CD14-positive monocyte (primary cell): ENCODE measurements at regions of chr19 and their contacts with region 1.

Region 1: DNA sequence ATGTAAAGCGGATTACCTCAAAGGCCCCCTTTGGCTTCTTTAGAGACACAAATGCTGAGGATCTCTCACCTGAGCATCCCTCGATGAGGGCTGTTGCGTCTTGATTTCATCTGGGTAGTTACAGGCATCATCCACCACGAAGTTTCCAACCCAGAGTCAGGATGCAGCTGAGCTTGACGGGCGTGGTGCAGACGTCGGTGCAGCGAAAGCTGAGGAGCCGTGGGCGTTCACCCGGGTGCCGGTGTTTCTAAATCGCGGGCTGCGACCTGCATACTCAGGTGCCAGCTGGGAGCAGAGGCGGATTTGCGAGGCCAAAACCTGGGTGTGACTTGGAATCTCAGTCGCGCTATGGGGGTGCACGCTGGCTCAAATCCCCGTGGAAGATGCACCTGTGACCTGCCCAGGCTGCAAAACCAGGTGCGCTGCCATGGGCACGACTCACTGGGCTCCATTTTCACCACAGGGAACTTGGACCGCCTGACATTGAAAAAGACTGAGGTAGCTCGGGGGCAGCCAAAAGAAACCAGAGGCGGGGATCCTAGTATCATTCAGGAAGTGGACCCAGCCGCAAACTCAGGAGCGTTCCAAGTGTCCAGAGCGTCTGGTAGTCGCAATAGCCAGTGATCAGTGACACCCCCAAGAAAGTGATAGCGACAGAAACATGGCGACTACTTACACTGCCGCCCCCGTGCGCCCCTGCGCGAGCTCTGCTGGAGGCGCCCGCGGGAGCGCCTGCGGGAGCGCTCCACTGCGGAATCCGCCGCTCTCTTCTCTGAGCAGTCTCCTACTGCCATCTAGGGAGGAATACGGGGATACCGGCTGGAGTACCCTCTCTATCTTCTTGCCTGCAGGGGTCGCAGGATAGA is 36.4 kb upstream of the IGFL4 start:
- DNase-seq: peak in 2 of 3 donors; percentile 18 to 58
- H3K4me3 ChIP-seq: no peak overlapping the region
- H3K4me3 Mint-ChIP-seq: peak overlapping the region in 1 of 2 donors; percentile 87
- H3K27ac ChIP-seq: no peak overlapping the region
- H3K27ac Mint-ChIP-seq: peak overlapping the region in 1 of 7 donors; percentile 20
- H3K4me1 ChIP-seq: peaks cover 5 to 17% of the 10 kb centered on the region in 2 donors
- H3K4me1 Mint-ChIP-seq: peaks cover 18% of the 10 kb centered on the region
- H3K27me3 ChIP-seq: peaks cover 54 to 80% of the 10 kb centered on the region in 2 donors
- H3K27me3 Mint-ChIP-seq: peaks cover 48 to 76% (median 69%) of the 10 kb centered on the region in 3 donors
- CTCF ChIP-seq: peak; percentile 52

Region 2: DNA sequence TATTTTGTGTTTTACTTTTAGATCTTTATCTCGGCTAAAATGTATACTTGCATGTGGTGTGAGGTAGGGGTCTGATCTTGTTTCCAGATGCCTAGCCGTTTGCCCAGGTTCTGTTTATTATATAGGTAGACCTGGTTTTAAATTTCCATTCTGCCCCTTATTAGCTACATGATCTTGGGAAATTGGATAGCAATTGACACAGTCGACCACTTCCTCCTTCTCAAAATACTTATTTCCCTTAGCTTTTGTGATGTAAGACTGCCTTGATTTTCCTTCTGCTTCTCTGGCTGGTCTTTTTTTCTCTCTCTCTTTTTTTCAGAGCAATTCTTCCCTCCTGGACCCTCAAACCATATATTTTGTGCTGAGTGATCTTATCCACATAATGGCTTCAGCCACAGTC is 51.3 kb before region 1 on chr19:
- intact Hi-C with region 1: loop called in 1 of 2 experiments (anchors 5 kb)
- DNase-seq: peak in 1 of 3 donors; percentile 28
- H3K4me3 ChIP-seq: no peak overlapping the region
- H3K4me3 Mint-ChIP-seq: peak overlapping the region in 1 of 2 donors; percentile 66
- H3K27ac ChIP-seq: no peak overlapping the region
- H3K27ac Mint-ChIP-seq: peak overlapping the region in 1 of 7 donors; percentile 72
- H3K4me1 ChIP-seq: peaks cover 27 to 33% of the 10 kb centered on the region in 2 donors
- H3K4me1 Mint-ChIP-seq: peaks cover 34% of the 10 kb centered on the region
- H3K27me3 ChIP-seq: peaks cover 3 to 38% of the 10 kb centered on the region in 2 donors
- H3K27me3 Mint-ChIP-seq: peaks cover 42 to 67% (median 53%) of the 10 kb centered on the region in 3 donors
- CTCF ChIP-seq: no peak

Region 3: DNA sequence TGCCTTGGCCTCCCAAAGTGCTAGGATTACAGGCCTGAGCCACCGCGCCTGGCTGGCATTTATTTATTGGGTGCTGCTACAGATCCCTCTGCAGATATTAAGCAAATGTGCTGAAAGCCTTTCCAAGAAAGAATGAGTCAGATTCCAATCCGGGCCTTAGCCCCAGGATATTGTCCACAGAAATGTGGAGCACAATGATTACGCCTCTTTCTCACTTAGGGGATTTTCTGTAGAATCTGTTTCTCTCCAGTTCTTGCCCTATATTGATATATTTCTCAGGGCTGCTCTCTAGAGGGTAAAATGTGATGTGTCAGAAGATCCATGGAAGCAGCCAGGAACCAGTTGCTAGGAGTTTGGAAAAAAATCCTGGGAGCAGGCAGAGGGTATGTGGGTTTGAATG is 11.6 kb before region 1 on chr19:
- intact Hi-C with region 1: no loop called
- DNase-seq: no peak
- H3K4me3 ChIP-seq: no peak overlapping the region
- H3K4me3 Mint-ChIP-seq: peak overlapping the region in 1 of 2 donors; percentile 33
- H3K27ac ChIP-seq: no peak overlapping the region
- H3K27ac Mint-ChIP-seq: no peak overlapping the region
- H3K4me1 ChIP-seq: peaks cover 10 to 12% of the 10 kb centered on the region in 2 donors
- H3K4me1 Mint-ChIP-seq: peaks cover 15% of the 10 kb centered on the region
- H3K27me3 ChIP-seq: peaks cover 44 to 60% of the 10 kb centered on the region in 2 donors
- H3K27me3 Mint-ChIP-seq: peaks cover 52 to 74% (median 57%) of the 10 kb centered on the region in 3 donors
- CTCF ChIP-seq: no peak

Region 4: DNA sequence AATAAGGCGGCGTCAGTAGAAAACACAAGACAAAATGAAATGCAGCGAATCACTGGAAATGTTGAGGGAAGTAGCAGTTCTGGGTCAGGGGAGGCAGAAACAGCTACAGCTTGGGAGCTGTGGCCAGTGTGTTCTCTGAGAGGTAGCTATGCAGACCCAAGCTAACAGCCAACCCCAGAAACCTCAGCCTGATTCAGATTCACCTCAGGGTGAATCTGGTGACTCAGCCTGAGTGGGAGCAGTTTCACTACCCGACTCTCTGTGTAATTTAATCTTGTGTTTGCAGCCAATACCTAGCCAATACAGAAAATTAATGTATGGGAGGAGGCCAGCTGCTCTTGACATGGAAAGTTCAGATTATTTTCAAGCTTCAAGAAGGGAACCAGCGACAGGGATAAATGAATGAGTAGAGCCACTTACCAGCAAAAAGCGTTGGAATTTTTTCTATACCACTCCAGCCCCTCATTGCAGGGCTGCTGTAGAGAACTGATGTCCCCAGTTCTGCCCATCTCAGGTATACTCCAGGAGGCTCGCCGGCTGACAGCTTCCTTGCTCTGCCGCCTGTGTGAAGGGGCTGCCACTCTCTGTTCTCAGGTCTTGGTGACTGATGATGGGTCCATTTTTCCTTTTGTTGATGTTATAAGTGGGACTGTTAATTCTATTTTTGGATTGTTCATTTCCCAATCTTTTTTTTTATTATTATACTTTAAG is 38.4 kb after region 1 on chr19:
- intact Hi-C with region 1: no loop called
- DNase-seq: no peak
- H3K4me3 ChIP-seq: no peak overlapping the region
- H3K4me3 Mint-ChIP-seq: no peak overlapping the region
- H3K27ac ChIP-seq: no peak overlapping the region
- H3K27ac Mint-ChIP-seq: no peak overlapping the region
- H3K4me1 ChIP-seq: no peaks in the 10 kb centered on the region
- H3K4me1 Mint-ChIP-seq: no peaks in the 10 kb centered on the region
- H3K27me3 ChIP-seq: peaks cover 4 to 8% of the 10 kb centered on the region in 2 donors
- H3K27me3 Mint-ChIP-seq: peaks cover 11 to 15% (median 15%) of the 10 kb centered on the region in 3 donors
- CTCF ChIP-seq: no peak

Region 5: GRCh38 chr19:46181388-46181779 is 104.2 kb after region 1 on chr19:
- intact Hi-C with region 1: loop called in 1 of 2 experiments (anchors 10 kb)
- DNase-seq: peak; percentile 76 to 94 (median 88)
- H3K4me3 ChIP-seq: no peak overlapping the region
- H3K4me3 Mint-ChIP-seq: peak overlapping the region in 1 of 2 donors; percentile 69
- H3K27ac ChIP-seq: peak overlapping the region in 1 of 2 donors; percentile 18
- H3K27ac Mint-ChIP-seq: peak overlapping the region; percentile 52 to 80 (median 64)
- H3K4me1 ChIP-seq: peaks cover 20 to 22% of the 10 kb centered on the region in 2 donors
- H3K4me1 Mint-ChIP-seq: peaks cover 26% of the 10 kb centered on the region
- H3K27me3 ChIP-seq: peaks cover 0 to 4% of the 10 kb centered on the region in 2 donors
- H3K27me3 Mint-ChIP-seq: peaks cover 10 to 26% (median 21%) of the 10 kb centered on the region in 3 donors
- CTCF ChIP-seq: no peak

Region 6: DNA sequence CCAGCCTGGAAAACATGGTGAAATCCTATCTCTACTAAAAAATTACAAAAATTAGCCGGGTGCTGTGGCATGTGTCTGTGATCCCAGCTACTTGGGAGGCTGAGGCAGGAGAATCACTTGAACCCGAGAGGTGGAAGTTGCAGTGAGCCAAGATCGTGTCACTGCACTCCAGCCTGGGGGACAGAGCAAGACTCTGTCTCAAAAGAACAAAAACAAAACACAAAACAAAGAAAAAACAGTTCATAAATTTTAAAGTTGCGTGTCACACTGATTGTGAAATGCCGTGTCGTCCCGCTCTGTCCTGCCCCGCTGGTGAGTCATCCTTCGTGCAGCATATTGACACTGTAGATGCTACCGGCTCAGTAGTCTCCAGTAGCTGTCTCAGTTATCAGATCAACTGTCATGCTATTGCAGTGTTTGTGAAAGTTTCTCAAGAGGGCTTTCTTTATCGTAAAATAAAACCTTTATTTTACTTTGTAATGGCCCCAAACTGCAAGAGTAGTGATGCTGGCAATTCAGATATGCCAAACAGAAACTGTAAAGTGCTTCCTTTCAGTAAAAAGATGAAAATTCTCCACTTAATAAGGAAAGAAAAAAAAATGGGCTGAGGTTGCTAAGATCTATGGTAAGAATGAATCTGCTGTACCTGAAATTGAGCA is 115.9 kb after region 1 on chr19:
- intact Hi-C with region 1: loop called (anchors 2 to 10 kb)
- DNase-seq: peak; percentile 95 to 98 (median 96)
- H3K4me3 ChIP-seq: peak overlapping the region; percentile 2 to 32 (median 9)
- H3K4me3 Mint-ChIP-seq: peak overlapping the region; percentile 71 to 83
- H3K27ac ChIP-seq: peak overlapping the region; percentile 91 to 96
- H3K27ac Mint-ChIP-seq: peak overlapping the region; percentile 98 to 100 (median 99)
- H3K4me1 ChIP-seq: peaks cover 31 to 34% of the 10 kb centered on the region in 2 donors
- H3K4me1 Mint-ChIP-seq: peaks cover 38% of the 10 kb centered on the region
- H3K27me3 ChIP-seq: peaks cover 0 to 2% of the 10 kb centered on the region in 2 donors
- H3K27me3 Mint-ChIP-seq: peaks cover 18 to 27% (median 26%) of the 10 kb centered on the region in 3 donors
- CTCF ChIP-seq: no peak

Region 7: DNA sequence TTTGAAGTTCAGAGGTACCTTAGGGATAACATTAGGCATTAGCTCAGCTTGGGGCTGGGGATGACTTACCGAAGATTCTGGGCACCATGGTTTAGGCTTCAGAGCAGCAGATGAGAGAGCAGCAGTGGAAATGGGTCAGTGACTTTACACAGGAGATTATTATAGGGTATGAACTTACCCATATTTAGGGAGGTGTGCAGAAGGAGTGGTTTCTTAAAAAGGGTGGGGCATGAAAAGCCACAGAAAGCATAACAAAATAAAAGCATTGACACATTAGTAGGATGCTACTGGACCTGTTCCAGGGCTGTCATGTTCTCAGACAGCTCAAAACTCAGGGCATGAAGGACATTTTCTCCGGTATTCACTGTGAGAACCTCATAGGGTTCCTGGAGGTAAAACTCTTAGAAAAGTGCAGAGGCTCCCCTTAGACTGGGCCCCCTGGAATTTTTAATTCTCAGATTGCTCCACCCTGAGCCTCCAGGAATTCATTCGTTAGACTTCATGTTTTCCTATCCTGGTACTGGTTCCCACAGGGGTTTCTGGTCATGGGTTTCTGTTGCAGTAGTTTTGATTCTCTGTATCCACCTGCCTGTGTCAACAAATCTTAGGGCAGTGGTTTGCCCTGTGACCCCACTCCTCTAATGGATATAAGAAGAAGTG is 173.0 kb after region 1 on chr19:
- intact Hi-C with region 1: no loop called
- DNase-seq: no peak
- H3K4me3 ChIP-seq: no peak overlapping the region
- H3K4me3 Mint-ChIP-seq: peak overlapping the region in 1 of 2 donors; percentile 33
- H3K27ac ChIP-seq: no peak overlapping the region
- H3K27ac Mint-ChIP-seq: no peak overlapping the region
- H3K4me1 ChIP-seq: peaks cover 0 to 9% of the 10 kb centered on the region in 2 donors
- H3K4me1 Mint-ChIP-seq: peaks cover 6% of the 10 kb centered on the region
- H3K27me3 ChIP-seq: peaks cover 16 to 20% of the 10 kb centered on the region in 2 donors
- H3K27me3 Mint-ChIP-seq: peaks cover 31 to 54% (median 40%) of the 10 kb centered on the region in 3 donors
- CTCF ChIP-seq: no peak

Region 8: DNA sequence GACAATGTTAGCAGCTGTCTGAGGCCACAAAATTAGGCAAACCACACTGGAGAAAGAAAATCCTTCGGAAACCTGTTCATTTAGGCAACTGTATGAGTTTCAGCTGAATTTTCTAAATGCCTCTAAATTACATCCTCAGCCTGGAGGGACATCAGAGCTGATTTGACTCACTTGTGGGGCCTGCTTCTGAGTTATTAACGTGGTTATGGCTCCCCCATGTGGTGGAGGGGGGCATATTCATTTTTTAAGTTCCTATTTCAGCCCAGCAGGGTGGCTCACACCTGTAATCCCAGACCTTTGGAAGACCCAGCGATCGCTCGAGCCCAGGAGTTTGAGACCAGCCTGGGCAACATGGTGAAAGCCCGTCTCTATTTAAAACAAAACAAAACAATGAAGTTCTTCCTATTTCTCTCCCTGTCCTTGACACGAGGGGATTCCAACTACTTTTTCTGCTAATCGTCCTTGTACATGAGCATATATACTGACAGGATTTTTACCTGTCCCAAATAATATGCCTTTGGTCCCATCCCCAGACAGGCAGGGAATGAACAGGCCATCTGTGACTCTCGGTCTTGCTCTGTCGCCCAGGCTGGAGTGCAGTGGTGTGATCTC is 188.1 kb after region 1 on chr19:
- intact Hi-C with region 1: loop called (anchors 5 kb)
- DNase-seq: peak; percentile 54 to 75 (median 61)
- H3K4me3 ChIP-seq: no peak overlapping the region
- H3K4me3 Mint-ChIP-seq: no peak overlapping the region
- H3K27ac ChIP-seq: no peak overlapping the region
- H3K27ac Mint-ChIP-seq: no peak overlapping the region
- H3K4me1 ChIP-seq: peaks cover 4 to 10% of the 10 kb centered on the region in 2 donors
- H3K4me1 Mint-ChIP-seq: peaks cover 8% of the 10 kb centered on the region
- H3K27me3 ChIP-seq: peaks cover under 1 to 10% of the 10 kb centered on the region in 2 donors
- H3K27me3 Mint-ChIP-seq: peaks cover 39 to 45% (median 43%) of the 10 kb centered on the region in 3 donors
- CTCF ChIP-seq: peak; percentile 90